ENCODE measurements at regions of chr12 and their contacts with region 1.

Region 1: DNA sequence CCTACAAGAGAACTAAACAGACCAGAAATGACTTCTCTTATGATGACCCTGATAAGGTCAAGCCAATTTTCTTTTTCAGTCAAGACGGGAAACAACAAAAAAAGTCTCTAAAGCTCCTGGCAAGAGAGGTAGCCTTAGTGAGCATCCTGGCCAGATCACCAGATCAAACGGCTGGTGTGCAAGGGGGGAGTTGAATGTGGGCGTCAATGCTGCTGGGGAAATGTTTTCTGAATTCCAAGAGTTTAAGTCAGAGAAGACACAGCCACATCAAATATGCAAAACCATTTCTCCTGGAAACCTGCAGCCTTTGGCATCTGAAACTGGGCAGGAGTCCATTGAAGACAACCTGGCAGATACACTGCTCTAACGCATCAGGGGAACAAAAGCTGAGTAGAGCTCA is 16.0 kb upstream of the SELPLG start:
- DNase-seq: no peak
- ATAC-seq: no peak
- H3K4me3 ChIP-seq: no peak overlapping the region
- H3K4me3 Mint-ChIP-seq: no peak overlapping the region
- H3K27ac ChIP-seq: peak overlapping the region in 1 of 2 donors; percentile 4
- H3K27ac Mint-ChIP-seq: peak overlapping the region; percentile 3
- H3K4me1 ChIP-seq: peaks cover 26% of the 10 kb centered on the region in 2 donors
- H3K4me1 Mint-ChIP-seq: peaks cover 55% of the 10 kb centered on the region
- H3K27me3 ChIP-seq: no peaks in the 10 kb centered on the region
- H3K27me3 Mint-ChIP-seq: no peaks in the 10 kb centered on the region
- CTCF ChIP-seq: no peak

Region 2: DNA sequence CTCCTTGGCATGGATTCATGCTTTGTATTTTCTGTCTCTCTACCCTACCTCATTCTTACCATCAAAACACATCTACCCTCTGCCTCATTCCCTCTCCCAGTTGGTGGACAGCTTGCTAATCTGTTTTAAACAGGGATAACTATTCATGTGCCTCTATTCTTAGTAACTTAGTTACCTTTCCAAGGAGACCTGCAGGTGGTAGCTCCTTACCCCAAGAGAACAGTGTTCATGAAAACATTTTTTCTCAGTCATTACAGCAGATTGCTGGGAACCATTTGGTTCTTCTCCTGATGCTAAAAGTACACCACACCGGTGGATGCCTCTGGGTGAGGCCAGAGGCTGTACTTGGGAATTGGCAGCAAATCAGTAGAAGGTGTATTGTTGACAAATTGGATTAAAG is 383.5 kb before region 1 on chr12:
- CTCF ChIA-PET with region 1: no interaction called
- POLR2A ChIA-PET with region 1: no interaction called
- intact Hi-C with region 1: no loop called
- DNase-seq: no peak
- ATAC-seq: no peak
- H3K4me3 ChIP-seq: no peak overlapping the region
- H3K4me3 Mint-ChIP-seq: no peak overlapping the region
- H3K27ac ChIP-seq: no peak overlapping the region
- H3K27ac Mint-ChIP-seq: no peak overlapping the region
- H3K4me1 ChIP-seq: no peaks in the 10 kb centered on the region
- H3K4me1 Mint-ChIP-seq: no peaks in the 10 kb centered on the region
- H3K27me3 ChIP-seq: peaks cover 0 to 7% (median 0%) of the 10 kb centered on the region in 4 experiments
- H3K27me3 Mint-ChIP-seq: peaks cover 19% of the 10 kb centered on the region
- CTCF ChIP-seq: no peak

Region 3: GRCh38 chr12:108570743-108571608 is 78.7 kb before region 1 on chr12:
- CTCF ChIA-PET with region 1: interaction called, 10 read pairs
- POLR2A ChIA-PET with region 1: interaction called, 3 read pairs
- intact Hi-C with region 1: no loop called
- DNase-seq: peak; percentile 48
- ATAC-seq: no peak
- H3K4me3 ChIP-seq: no peak overlapping the region
- H3K4me3 Mint-ChIP-seq: no peak overlapping the region
- H3K27ac ChIP-seq: peak overlapping the region in 1 of 2 donors; percentile 64
- H3K27ac Mint-ChIP-seq: peak overlapping the region; percentile 80
- H3K4me1 ChIP-seq: peaks cover 56 to 76% of the 10 kb centered on the region in 2 donors
- H3K4me1 Mint-ChIP-seq: peaks cover 82% of the 10 kb centered on the region
- H3K27me3 ChIP-seq: no peaks in the 10 kb centered on the region
- H3K27me3 Mint-ChIP-seq: no peaks in the 10 kb centered on the region
- CTCF ChIP-seq: peak; percentile 41

Region 4: DNA sequence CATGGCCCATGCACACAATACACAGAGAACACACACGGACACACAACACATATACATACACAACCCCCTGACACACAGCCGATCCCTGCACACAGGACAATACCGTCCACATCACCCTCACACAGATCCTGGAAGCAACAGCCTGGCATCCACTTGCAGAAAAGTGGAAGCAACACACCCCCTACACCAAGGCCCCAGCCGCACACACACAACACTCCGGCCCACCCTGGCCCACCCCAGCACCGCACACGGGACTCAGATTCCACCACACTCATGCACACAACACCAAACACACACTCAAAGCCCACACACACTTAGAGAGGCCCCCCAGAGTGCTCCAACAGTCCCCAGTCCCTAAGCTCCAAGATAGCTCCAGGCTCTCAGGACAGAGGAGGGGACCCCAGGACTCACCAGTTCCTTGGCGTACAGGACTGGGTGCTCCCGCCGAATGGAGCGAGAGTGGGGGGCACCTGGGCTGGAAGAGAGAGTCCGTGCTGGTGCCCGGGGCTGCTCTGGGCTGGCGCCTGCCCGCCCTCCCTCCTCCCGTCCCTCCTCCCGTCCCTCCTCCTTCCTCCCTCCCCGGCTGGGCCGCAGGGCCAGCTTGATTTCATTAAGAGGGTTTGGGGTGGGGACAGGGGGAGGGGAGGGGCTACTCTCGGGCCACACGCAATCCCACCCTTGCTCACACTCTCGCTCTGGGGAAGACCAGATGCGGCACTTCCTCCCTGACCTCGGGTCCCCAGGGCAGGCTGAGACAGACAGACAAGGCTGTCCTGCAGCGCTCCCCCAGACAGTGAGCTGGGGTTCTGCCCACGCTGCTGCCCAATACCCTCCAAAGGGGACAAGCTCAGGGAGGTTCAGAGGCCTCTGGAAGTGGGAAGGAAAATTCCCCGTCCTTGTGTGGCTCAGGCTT is 51.9 kb before region 1 on chr12 and contains the start of gene TMEM119:
- CTCF ChIA-PET with region 1: no interaction called
- POLR2A ChIA-PET with region 1: no interaction called
- intact Hi-C with region 1: no loop called
- DNase-seq: no peak
- ATAC-seq: no peak
- H3K4me3 ChIP-seq: no peak within 1 kb of the TSS
- H3K4me3 Mint-ChIP-seq: no peak within 1 kb of the TSS
- H3K27ac ChIP-seq: no peak within 1 kb of the TSS
- H3K27ac Mint-ChIP-seq: no peak within 1 kb of the TSS
- H3K4me1 ChIP-seq: no peaks in the 10 kb centered on the region
- H3K4me1 Mint-ChIP-seq: no peaks in the 10 kb centered on the region
- H3K27me3 ChIP-seq: no peaks in the 10 kb centered on the region
- H3K27me3 Mint-ChIP-seq: no peaks in the 10 kb centered on the region
- CTCF ChIP-seq: no peak
- total RNA-seq, gene TMEM119: 0.25 TPM in 1 of 2 replicates, not detected in the other

Region 5: GRCh38 chr12:108611884-108612415 is 37.7 kb before region 1 on chr12:
- CTCF ChIA-PET with region 1: interaction called, 133 read pairs
- POLR2A ChIA-PET with region 1: interaction called, 5 read pairs
- intact Hi-C with region 1: loop called (anchors 1 kb)
- DNase-seq: peak; percentile 75
- ATAC-seq: peak; percentile 35
- H3K4me3 ChIP-seq: no peak overlapping the region
- H3K4me3 Mint-ChIP-seq: no peak overlapping the region
- H3K27ac ChIP-seq: no peak overlapping the region
- H3K27ac Mint-ChIP-seq: peak overlapping the region; percentile 51
- H3K4me1 ChIP-seq: peaks cover 21 to 33% of the 10 kb centered on the region in 2 donors
- H3K4me1 Mint-ChIP-seq: peaks cover 43% of the 10 kb centered on the region
- H3K27me3 ChIP-seq: peaks cover 0 to 12% (median 2%) of the 10 kb centered on the region in 4 experiments
- H3K27me3 Mint-ChIP-seq: peaks cover 10% of the 10 kb centered on the region
- CTCF ChIP-seq: peak; percentile 66

Region 6: GRCh38 chr12:108704527-108704926 is 54.9 kb after region 1 on chr12:
- CTCF ChIA-PET with region 1: no interaction called
- POLR2A ChIA-PET with region 1: no interaction called
- intact Hi-C with region 1: no loop called
- DNase-seq: no peak
- ATAC-seq: no peak
- H3K4me3 ChIP-seq: no peak overlapping the region
- H3K4me3 Mint-ChIP-seq: no peak overlapping the region
- H3K27ac ChIP-seq: no peak overlapping the region
- H3K27ac Mint-ChIP-seq: no peak overlapping the region
- H3K4me1 ChIP-seq: peaks cover 5 to 9% of the 10 kb centered on the region in 2 donors
- H3K4me1 Mint-ChIP-seq: peaks cover 28% of the 10 kb centered on the region
- H3K27me3 ChIP-seq: no peaks in the 10 kb centered on the region
- H3K27me3 Mint-ChIP-seq: no peaks in the 10 kb centered on the region
- CTCF ChIP-seq: no peak

Region 7: DNA sequence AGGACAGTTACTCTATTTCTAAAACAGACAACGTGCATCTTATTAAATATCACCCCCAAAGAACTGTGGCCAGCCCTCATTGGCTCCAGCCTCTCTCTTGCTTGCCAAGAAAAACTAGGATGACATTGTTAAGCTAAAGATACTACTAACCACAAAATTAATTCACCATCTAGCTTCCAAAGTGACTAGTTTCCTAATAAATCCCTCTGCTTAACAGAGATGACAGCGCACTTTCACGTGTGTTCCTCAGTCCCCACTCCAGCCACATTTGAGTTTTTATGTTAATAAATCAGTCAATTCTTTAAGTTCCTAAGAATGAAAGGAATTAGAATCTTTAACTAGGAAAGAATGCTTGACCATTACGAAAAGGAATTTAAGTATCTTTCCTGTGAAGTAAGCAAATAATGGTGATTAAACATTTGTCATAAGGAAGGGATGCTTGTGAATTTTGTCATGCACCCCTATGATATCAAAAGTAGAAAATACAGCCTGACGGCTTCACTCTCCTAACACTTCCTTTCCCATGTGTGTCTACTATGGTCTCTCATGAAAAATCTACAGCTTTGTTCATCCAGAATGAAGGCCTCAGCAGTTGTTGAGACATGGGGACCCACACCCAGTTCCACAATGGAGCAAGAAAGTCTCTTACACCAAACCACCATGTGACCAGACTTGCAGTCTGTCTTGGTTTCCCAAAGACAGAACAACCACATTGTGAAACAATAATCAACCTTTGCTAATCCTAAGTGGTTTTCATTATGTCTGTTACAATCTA is 73.5 kb after region 1 on chr12:
- CTCF ChIA-PET with region 1: no interaction called
- POLR2A ChIA-PET with region 1: interaction called, 10 read pairs
- intact Hi-C with region 1: no loop called
- DNase-seq: no peak
- ATAC-seq: no peak
- H3K4me3 ChIP-seq: no peak overlapping the region
- H3K4me3 Mint-ChIP-seq: no peak overlapping the region
- H3K27ac ChIP-seq: no peak overlapping the region
- H3K27ac Mint-ChIP-seq: no peak overlapping the region
- H3K4me1 ChIP-seq: peaks cover 7 to 17% of the 10 kb centered on the region in 2 donors
- H3K4me1 Mint-ChIP-seq: peaks cover 55% of the 10 kb centered on the region
- H3K27me3 ChIP-seq: no peaks in the 10 kb centered on the region
- H3K27me3 Mint-ChIP-seq: no peaks in the 10 kb centered on the region
- CTCF ChIP-seq: no peak